PC-9 (cell line): ENCODE measurements at regions of chr10 and their contacts with region 1.

Region 1: DNA sequence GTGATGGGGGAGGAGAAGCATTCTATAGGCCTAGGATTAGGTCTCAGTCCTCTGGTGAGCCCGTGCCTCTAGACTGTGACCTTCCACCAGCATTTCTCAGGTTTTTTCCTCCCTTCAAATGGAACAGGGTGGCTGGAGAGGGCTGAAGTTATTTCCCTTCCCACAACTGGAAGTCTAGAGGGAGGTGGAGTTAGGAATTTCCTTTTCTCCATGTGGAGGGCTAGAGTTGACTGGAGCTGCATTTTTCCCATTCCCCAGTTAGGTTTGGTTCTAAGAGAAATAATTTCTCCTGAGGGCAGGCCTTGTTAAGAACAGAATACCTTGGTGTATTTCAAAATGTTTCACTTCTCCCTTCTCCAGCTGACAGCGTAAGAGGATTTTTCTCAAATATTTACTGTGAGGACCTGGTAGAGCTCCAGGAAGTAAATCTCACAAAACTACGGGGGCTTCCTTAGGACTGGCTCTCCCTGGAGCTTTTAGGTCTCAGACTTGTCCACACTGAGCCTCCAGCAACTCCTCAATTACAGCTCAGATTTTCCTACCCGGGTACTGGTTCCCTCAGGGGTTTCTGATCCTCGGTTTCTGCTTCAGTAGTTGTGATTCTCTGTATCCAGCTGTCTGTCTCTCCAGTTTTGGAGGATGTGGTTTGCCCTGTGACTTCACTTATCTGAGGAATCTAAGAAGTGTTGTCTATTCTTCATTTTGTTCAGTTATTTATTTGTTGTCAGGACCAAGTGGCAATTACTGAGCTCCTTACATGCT is 6.0 kb upstream of the REEP3 start:
- DNase-seq: peak; percentile 47 to 48
- H3K4me3 ChIP-seq: no peak overlapping the region
- H3K27ac ChIP-seq: peak overlapping the region; percentile 46
- H3K4me1 ChIP-seq: peaks cover 38% of the 10 kb centered on the region
- H3K27me3 ChIP-seq: no peaks in the 10 kb centered on the region
- CTCF ChIP-seq: no peak

Region 2: DNA sequence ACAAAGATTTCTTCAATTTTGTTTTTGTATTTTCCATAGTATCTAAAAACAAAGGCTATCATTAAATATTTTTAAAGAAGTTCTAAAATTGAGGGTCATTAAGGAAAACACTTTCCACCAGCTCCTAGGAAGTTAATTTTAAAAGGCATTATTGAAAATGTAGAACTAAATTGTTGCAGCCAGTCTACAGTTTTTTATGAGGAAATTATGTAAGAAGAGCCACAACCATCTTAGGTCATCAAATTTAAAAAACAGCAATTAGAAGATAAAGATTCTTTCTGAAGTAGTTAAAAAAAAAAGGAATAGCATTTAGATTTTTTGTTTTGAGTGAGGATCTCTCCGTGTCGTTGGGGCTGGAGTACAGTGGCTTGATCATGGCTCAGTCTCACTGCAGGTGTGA is 220.4 kb before region 1 on chr10:
- CTCF ChIA-PET with region 1: no interaction called
- POLR2A ChIA-PET with region 1: interaction called, 10 read pairs
- intact Hi-C with region 1: no loop called
- DNase-seq: no peak
- H3K4me3 ChIP-seq: no peak overlapping the region
- H3K27ac ChIP-seq: no peak overlapping the region
- H3K4me1 ChIP-seq: no peaks in the 10 kb centered on the region
- H3K27me3 ChIP-seq: no peaks in the 10 kb centered on the region
- CTCF ChIP-seq: no peak

Region 3: GRCh38 chr10:63331586-63331985 is 183.6 kb before region 1 on chr10:
- CTCF ChIA-PET with region 1: no interaction called
- POLR2A ChIA-PET with region 1: no interaction called
- intact Hi-C with region 1: no loop called
- DNase-seq: no peak
- H3K4me3 ChIP-seq: no peak overlapping the region
- H3K27ac ChIP-seq: no peak overlapping the region
- H3K4me1 ChIP-seq: no peaks in the 10 kb centered on the region
- H3K27me3 ChIP-seq: no peaks in the 10 kb centered on the region
- CTCF ChIP-seq: no peak

Region 4: GRCh38 chr10:63465293-63466143 is 49.7 kb before region 1 on chr10 and contains the start of gene JMJD1C:
- CTCF ChIA-PET with region 1: no interaction called
- POLR2A ChIA-PET with region 1: interaction called, 3 read pairs
- intact Hi-C with region 1: loop called (anchors 2 kb)
- DNase-seq: peak; percentile 65 to 80
- H3K4me3 ChIP-seq: peak within 1 kb of the TSS; percentile 94
- H3K27ac ChIP-seq: peak within 1 kb of the TSS; percentile 33
- H3K4me1 ChIP-seq: peaks cover 23% of the 10 kb centered on the region
- H3K27me3 ChIP-seq: no peaks in the 10 kb centered on the region
- CTCF ChIP-seq: no peak
- total RNA-seq, gene JMJD1C: 68.6 and 78.7 TPM in 2 replicates

Region 5: DNA sequence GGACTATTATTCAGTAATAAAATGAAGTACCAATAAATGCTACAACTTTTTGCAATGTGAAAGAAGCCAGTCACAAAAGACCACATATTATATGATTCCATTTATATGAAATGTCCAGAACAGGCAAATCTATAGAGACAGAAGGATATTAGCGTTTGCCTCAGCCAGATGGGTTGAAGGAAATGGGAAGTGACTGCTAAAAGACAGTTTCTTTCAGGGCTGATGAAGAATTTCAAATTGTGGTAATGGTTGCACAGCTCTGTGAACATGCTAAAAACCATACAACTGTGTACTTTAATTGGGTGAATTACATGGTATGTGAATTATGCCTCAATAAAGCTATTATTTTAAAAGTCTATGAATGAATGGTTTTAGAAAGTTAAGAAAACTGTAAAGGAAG is 17.9 kb before region 1 on chr10:
- CTCF ChIA-PET with region 1: no interaction called
- POLR2A ChIA-PET with region 1: no interaction called
- intact Hi-C with region 1: no loop called
- DNase-seq: no peak
- H3K4me3 ChIP-seq: no peak overlapping the region
- H3K27ac ChIP-seq: no peak overlapping the region
- H3K4me1 ChIP-seq: peaks cover 7% of the 10 kb centered on the region; the same call in 1 of the 2 replicates
- H3K27me3 ChIP-seq: no peaks in the 10 kb centered on the region
- CTCF ChIP-seq: no peak

Region 6: GRCh38 chr10:63644418-63645142 is 129.4 kb after region 1 on chr10:
- CTCF ChIA-PET with region 1: no interaction called
- POLR2A ChIA-PET with region 1: no interaction called
- intact Hi-C with region 1: no loop called
- DNase-seq: no peak
- H3K4me3 ChIP-seq: no peak overlapping the region
- H3K27ac ChIP-seq: no peak overlapping the region
- H3K4me1 ChIP-seq: no peaks in the 10 kb centered on the region
- H3K27me3 ChIP-seq: no peaks in the 10 kb centered on the region
- CTCF ChIP-seq: no peak

Region 7: DNA sequence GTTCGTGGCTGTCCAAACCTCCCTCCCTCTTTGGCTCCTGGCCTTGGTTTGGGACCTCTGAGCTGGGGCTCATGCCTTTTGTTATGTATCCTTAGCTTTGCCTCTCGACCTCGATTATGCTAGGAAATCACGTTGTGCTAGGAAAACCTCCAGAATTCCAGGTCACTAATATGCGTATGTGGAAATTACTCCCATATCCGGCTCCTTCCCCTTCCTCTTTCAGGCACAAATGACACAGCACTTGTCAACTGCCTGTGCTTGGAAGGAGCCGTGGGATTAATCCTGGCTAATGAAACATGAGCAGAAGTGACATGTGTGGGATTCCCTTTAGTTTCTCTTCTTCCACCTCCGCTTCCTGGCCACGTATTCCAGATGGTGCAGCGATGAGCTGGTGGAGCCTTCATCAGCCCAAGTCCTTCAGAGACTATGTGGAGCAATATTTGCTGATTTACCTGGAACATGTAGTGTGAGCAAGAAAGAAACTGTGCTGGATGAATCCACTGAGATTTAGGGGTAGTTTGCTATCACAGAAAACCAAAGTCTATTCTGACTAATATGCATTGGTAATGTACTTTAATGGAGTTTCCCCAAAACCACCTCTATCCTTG is 155.2 kb after region 1 on chr10:
- CTCF ChIA-PET with region 1: no interaction called
- POLR2A ChIA-PET with region 1: no interaction called
- intact Hi-C with region 1: no loop called
- DNase-seq: no peak
- H3K4me3 ChIP-seq: no peak overlapping the region
- H3K27ac ChIP-seq: no peak overlapping the region
- H3K4me1 ChIP-seq: 0 out of 2 replicates have a peak, but pooled peaks cover 7% of the 10 kb centered on the region
- H3K27me3 ChIP-seq: no peaks in the 10 kb centered on the region
- CTCF ChIP-seq: no peak